ENCODE measurements at regions of chr7 and their contacts with region 1.

Region 1: DNA sequence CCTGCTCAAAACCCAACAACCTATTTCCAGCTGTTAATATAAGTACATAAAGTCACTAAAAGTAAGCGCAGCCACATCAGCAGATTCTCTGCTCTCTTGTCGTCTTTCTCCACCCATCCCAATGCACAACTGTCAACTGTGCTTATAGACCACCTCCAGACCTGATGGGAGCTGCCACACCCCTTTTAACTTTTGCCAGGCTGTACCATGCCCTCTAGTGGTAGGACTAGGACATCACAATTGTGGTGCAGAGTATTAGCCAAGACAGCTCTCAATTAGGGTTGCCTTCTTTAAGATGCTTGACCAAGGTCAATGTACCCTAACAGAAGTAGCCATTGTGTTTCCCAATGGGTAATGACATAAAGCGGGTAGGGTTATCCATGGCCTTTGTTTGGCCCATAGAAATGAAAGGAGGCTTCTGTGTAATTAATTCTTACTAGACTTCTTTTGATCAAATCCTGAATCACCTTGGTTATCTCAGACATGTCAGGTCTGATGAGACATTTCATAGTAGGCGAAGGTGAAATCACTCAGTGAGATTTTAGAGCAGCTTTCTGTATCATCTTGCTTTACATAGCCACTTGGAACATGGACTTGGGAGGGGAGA is 68.1 kb downstream of the SCRN1 start:
- DNase-seq: peak in 1 of 2 donors; percentile 68
- ATAC-seq: peak; percentile 84 to 95 (median 86)
- H3K4me3 ChIP-seq: no peak overlapping the region
- H3K4me3 Mint-ChIP-seq: no peak overlapping the region
- H3K27ac ChIP-seq: no peak overlapping the region
- H3K27ac Mint-ChIP-seq: no peak overlapping the region
- H3K4me1 ChIP-seq: no peaks in the 10 kb centered on the region
- H3K4me1 Mint-ChIP-seq: no peaks in the 10 kb centered on the region
- H3K27me3 ChIP-seq: no peaks in the 10 kb centered on the region
- H3K27me3 Mint-ChIP-seq: no peaks in the 10 kb centered on the region
- CTCF ChIP-seq: peak; percentile 78

Region 2: DNA sequence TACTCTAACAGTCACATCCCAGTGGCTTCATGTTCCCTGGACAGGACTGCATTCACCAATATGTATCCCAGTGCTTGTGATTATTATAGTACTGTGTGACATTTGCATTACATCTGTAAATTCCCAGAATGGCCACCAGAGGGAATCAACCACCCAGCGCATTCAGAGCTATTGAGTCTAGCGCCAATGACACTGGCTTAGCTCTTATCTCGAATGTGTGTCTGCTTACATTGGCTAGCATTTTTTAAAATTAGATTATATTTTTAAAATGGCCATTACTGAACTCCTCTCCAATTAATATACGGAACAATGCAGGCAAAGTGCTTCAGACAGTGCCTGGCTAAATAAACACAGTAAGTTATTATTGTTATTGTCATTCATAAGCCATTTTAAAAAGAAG is 999.7 kb before region 1 on chr7:
- intact Hi-C with region 1: loop called (anchors 5 kb)
- DNase-seq: peak in 1 of 2 donors; percentile 71
- ATAC-seq: peak; percentile 76 to 89 (median 88)
- H3K4me3 ChIP-seq: no peak overlapping the region
- H3K4me3 Mint-ChIP-seq: no peak overlapping the region
- H3K27ac ChIP-seq: no peak overlapping the region
- H3K27ac Mint-ChIP-seq: no peak overlapping the region
- H3K4me1 ChIP-seq: peaks cover 4% of the 10 kb centered on the region
- H3K4me1 Mint-ChIP-seq: peaks cover 15 to 16% of the 10 kb centered on the region in 2 donors
- H3K27me3 ChIP-seq: peaks cover 2% of the 10 kb centered on the region
- H3K27me3 Mint-ChIP-seq: peaks cover 11 to 13% of the 10 kb centered on the region in 2 donors
- CTCF ChIP-seq: peak; percentile 57

Region 3: DNA sequence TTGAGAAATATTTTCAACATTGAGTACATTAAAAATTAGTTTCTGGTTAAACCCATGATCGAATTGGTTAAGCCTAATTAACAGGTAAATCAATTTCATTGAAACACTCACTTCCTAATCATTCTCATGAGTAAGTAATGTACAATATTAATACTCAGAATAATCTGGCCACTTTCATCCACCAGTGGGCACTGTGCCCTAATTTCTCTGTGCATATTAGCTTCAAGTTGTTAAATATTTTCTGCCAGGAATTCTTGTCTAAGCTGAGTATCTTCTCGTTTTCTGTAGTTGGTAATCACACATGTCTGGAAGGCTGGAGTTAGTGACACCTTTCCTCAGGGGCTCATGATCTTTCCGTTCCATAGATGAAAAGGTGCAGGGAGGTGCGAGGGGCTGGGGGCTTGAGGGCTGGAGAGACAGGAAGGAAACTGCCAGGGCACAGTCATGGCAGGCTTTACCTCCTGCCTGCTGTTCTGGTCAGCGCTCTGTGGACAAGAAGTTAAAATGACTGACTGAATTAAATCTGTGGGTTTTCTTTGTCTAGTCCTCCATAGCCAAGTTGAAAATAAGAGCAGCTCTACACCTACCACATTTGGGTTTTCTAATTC is 43.3 kb before region 1 on chr7:
- intact Hi-C with region 1: no loop called
- DNase-seq: peak in 1 of 2 donors; percentile 59
- ATAC-seq: peak in 1 of 3 donors; percentile 70
- H3K4me3 ChIP-seq: no peak overlapping the region
- H3K4me3 Mint-ChIP-seq: no peak overlapping the region
- H3K27ac ChIP-seq: no peak overlapping the region
- H3K27ac Mint-ChIP-seq: no peak overlapping the region
- H3K4me1 ChIP-seq: no peaks in the 10 kb centered on the region
- H3K4me1 Mint-ChIP-seq: peaks cover 5 to 13% of the 10 kb centered on the region in 2 donors
- H3K27me3 ChIP-seq: no peaks in the 10 kb centered on the region
- H3K27me3 Mint-ChIP-seq: peaks cover 17 to 33% of the 10 kb centered on the region in 2 donors
- CTCF ChIP-seq: peak; percentile 66

Measured in natural killer cell (primary cell).